Gastrocnemius medialis (tissue), 4 donors: ENCODE measurements at regions of chr4 and their contacts with region 1.

Region 1: DNA sequence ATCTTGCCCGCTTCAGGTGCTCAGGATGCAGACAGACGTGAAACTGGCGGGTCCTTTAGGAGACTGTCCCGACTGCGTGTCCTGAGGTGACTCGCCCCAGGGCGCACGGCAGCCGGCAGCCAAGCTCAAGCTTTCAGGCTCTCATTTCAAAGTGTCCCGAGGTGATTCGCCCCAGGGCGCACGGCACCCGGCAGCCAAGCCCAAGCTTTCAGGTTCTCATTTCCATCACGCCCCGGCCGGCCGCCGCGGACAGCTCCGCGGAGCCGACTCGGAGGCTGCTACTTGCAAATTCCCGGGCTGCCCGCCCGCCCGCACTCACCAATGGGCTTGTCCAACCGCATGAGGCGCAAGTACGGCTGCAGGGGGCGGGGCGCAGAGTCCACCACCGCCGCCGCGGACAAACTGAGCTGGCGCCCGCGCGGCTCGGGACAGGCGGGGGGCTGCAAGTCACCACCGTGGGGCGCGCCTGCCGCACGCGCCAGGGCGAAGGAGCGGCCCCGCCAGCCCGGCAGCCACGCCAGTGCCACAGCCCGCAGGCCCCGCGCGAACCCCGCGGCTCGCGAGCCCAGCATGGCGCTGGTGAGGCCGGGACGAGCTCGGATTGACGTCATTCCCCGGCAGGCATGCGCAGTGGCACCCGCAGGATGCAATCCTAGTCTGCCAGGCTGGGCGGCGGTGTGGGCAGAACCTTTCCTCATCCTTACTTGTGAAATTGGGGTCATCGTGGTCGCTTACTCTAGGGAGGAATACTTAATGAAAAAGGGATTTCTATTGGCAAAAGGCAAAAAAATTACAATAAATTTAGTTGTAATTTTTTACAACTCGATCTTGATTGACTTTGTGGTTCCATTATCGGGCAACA is at the start of gene COQ2:
- DNase-seq: peak; percentile 91 to 94
- ATAC-seq: peak; percentile 96
- H3K4me3 ChIP-seq: peak within 1 kb of the TSS; percentile 66 to 72 (median 68)
- H3K27ac ChIP-seq: peak within 1 kb of the TSS; percentile 85 to 97 (median 94)
- H3K4me1 ChIP-seq: peaks cover 26 to 30% of the 10 kb centered on the region in 2 donors
- H3K27me3 ChIP-seq: no peaks in the 10 kb centered on the region
- CTCF ChIP-seq: peak; percentile 31 to 55 (median 41)
- POLR2A ChIP-seq: peak; percentile 65 to 71
- total RNA-seq, gene COQ2: 9.0 to 15.7 (median 11.5) TPM

Region 2: DNA sequence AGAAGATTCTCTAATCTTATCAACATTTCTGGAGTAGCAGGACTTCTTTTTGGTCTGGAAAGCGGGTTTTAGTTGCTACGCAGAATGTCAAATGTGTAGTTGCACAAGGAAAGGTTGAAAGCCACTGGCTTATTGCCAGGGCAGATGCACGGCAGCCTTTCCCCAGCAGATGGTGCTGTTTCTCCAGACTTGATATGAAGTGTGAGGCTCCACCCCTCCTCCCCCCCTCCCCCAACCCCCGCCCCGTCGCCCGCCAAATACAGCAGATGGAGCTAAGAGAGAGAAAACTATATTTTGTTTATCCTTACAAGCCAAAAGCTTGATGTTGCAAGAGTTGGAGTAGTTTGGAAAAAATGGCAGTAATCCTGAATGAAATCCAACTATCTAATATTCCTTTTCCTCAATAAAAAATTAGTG is 822.0 kb before region 1 on chr4:
- in situ Hi-C with region 1: no loop called
- intact Hi-C with region 1: loop called (anchors 5 kb)
- DNase-seq: peak; percentile 64 to 87
- ATAC-seq: peak; percentile 82 to 93
- H3K4me3 ChIP-seq: no peak overlapping the region
- H3K27ac ChIP-seq: no peak overlapping the region
- H3K4me1 ChIP-seq: peaks cover 0 to 5% of the 10 kb centered on the region in 2 donors
- H3K27me3 ChIP-seq: no peaks in the 10 kb centered on the region
- CTCF ChIP-seq: peak; percentile 39 to 94 (median 71)
- POLR2A ChIP-seq: no peak

Region 3: DNA sequence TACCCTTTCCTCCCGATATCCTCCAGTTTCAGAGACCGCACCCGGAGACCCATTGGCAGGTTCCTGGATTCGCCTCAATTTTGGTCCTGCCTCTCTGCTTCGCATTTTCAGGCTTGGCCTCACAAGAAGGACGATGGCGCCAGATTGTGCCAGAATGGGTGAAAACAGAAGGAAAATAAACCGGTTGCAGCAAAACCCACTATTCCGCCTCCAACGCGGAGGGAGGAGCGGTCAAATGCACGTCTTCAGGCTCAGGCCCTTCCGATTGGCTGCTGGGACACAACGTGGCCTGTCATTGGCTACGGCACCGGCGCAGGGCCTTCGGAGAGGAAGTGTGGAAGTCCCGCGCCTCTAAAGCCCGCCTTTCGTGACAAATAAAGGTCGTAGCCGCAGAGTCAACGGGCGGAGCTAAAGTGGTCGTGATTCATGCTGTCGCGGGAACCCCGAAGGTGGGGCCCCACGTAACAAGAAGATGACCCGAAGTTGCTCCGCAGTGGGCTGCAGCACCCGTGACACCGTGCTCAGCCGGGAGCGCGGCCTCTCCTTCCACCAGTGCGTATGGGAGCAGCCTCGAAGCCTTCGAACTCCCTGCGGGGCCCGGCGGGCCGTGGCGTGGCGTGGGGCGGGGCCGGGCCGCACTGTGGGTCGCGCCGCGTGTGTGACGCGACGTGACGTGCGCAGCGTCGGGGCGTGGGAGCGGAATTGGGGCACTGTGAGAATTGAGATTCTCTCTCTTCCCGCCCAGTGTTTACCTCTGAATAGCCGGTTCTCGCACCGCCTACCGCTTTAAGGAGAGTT is 383.9 kb before region 1 on chr4 and contains the start of gene THAP9:
- in situ Hi-C with region 1: no loop called
- intact Hi-C with region 1: loop called (anchors 2 kb)
- DNase-seq: peak; percentile 99
- ATAC-seq: peak; percentile 96
- H3K4me3 ChIP-seq: peak within 1 kb of the TSS; percentile 65 to 92 (median 82)
- H3K27ac ChIP-seq: peak within 1 kb of the TSS; percentile 94 to 98 (median 96)
- H3K4me1 ChIP-seq: peaks cover 32 to 34% of the 10 kb centered on the region in 2 donors
- H3K27me3 ChIP-seq: no peaks in the 10 kb centered on the region
- CTCF ChIP-seq: no peak
- POLR2A ChIP-seq: peak; percentile 78 to 89
- total RNA-seq, gene THAP9: 7.6 to 11.1 (median 8.4) TPM

Region 4: GRCh38 chr4:83034630-83035494 is 249.6 kb before region 1 on chr4 and contains the start of gene COPS4:
- in situ Hi-C with region 1: loop called in 1 of 4 experiments (anchors 10 kb)
- intact Hi-C with region 1: no loop called
- DNase-seq: peak; percentile 98 to 99
- ATAC-seq: peak; percentile 98 to 99
- H3K4me3 ChIP-seq: peak within 1 kb of the TSS; percentile 84 to 97 (median 90)
- H3K27ac ChIP-seq: peak within 1 kb of the TSS; percentile 91 to 93 (median 92)
- H3K4me1 ChIP-seq: peaks cover 26 to 33% of the 10 kb centered on the region in 2 donors
- H3K27me3 ChIP-seq: no peaks in the 10 kb centered on the region
- CTCF ChIP-seq: peak in 4 of 5 experiments; percentile 31 to 68 (median 52)
- POLR2A ChIP-seq: peak; percentile 57 to 79
- total RNA-seq, gene COPS4: 67.9 to 151 (median 91.9) TPM

Region 5: GRCh38 chr4:83261307-83261706 is 23.1 kb before region 1 on chr4:
- in situ Hi-C with region 1: no loop called
- intact Hi-C with region 1: loop called (anchors 2 kb)
- DNase-seq: no peak
- ATAC-seq: no peak
- H3K4me3 ChIP-seq: no peak overlapping the region
- H3K27ac ChIP-seq: peak overlapping the region; percentile 4 to 40 (median 25)
- H3K4me1 ChIP-seq: peaks cover 12 to 22% of the 10 kb centered on the region in 2 donors
- H3K27me3 ChIP-seq: no peaks in the 10 kb centered on the region
- CTCF ChIP-seq: no peak
- POLR2A ChIP-seq: no peak

Region 6: DNA sequence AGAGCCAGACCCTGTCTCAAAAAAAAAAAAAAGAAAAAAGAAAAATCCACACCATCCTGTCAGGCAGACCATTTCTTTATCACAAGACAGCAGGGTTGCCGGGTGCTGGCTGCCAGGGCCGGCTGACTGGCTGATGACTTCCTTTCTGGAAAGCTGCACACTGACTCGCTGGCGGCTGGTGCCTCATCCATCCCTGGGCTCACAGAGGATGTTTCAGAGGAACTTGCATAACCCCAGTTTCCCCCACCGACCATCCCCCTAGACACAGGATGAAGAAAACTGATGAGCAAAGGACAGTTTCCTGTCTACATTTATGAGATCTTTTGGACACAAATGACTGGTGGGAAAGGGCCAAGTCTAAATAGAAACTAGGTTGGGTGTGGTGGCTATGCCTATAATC is 36.1 kb after region 1 on chr4:
- in situ Hi-C with region 1: no loop called
- intact Hi-C with region 1: no loop called
- DNase-seq: peak; percentile 25 to 38
- ATAC-seq: peak in 1 of 2 donors; percentile 36
- H3K4me3 ChIP-seq: no peak overlapping the region
- H3K27ac ChIP-seq: no peak overlapping the region
- H3K4me1 ChIP-seq: no peaks in the 10 kb centered on the region
- H3K27me3 ChIP-seq: no peaks in the 10 kb centered on the region
- CTCF ChIP-seq: no peak
- POLR2A ChIP-seq: no peak

Region 7: GRCh38 chr4:83484500-83485461 is 200.4 kb after region 1 on chr4 and contains the start of gene ABRAXAS1:
- in situ Hi-C with region 1: no loop called
- intact Hi-C with region 1: no loop called
- DNase-seq: peak; percentile 88 to 93
- ATAC-seq: peak; percentile 92 to 98
- H3K4me3 ChIP-seq: peak within 1 kb of the TSS; percentile 86 to 95 (median 90)
- H3K27ac ChIP-seq: peak within 1 kb of the TSS; percentile 81 to 96 (median 90)
- H3K4me1 ChIP-seq: peaks cover 13 to 18% of the 10 kb centered on the region in 2 donors
- H3K27me3 ChIP-seq: no peaks in the 10 kb centered on the region
- CTCF ChIP-seq: no peak
- POLR2A ChIP-seq: peak; percentile 92 to 96
- total RNA-seq, gene ABRAXAS1: 4.8 to 12.4 (median 7.0) TPM

Region 8: DNA sequence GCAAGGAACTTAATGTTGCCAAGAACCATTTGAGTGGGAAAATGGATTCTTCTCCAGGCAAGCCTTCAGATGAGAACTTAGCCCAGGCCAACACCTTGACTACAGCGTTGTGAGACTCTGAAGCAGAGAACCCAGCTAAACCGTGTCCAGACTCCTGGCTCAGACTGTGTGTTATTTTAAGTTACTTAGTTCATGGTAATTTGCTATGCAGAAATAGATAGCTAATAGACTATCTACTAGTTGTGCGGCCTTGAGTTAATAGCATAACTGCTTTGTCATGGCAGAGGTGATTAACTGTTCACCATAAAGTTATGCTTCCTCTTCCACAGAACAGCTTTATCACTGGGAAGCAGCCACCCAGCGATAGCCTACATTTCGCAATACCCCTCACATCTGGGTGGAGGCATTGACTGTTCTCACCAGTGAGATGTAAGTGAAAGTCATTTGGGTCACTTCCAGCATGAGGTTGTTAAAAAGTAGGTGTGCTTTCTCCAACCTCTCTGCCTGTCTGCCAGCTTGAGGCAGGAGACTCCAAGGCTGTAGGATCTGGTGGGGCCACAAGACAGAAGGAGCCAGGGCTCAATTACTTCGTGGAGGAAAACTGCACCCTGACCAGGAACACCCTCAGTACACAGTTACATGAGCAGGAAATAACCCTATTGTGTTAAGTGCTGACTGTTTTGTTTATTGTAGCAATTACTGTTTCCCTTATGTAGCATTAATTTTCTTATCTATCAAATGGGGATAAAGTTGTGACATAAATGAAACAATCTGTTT is 345.7 kb after region 1 on chr4:
- in situ Hi-C with region 1: no loop called
- intact Hi-C with region 1: loop called (anchors 10 kb)
- DNase-seq: no peak
- ATAC-seq: no peak
- H3K4me3 ChIP-seq: peak overlapping the region in 1 of 4 donors; percentile 14
- H3K27ac ChIP-seq: peak overlapping the region; percentile 1 to 44 (median 40)
- H3K4me1 ChIP-seq: peaks cover 38 to 43% of the 10 kb centered on the region in 2 donors
- H3K27me3 ChIP-seq: no peaks in the 10 kb centered on the region
- CTCF ChIP-seq: no peak
- POLR2A ChIP-seq: no peak